PC-9 (cell line): ENCODE measurements at regions of chr22 and their contacts with region 1.

Region 1: GRCh38 chr22:23888615-23889401 is 5.4 kb upstream of the MIF start:
- DNase-seq: no peak
- H3K4me3 ChIP-seq: no peak overlapping the region
- H3K27ac ChIP-seq: peak overlapping the region; percentile 69
- H3K4me1 ChIP-seq: peaks cover 21% of the 10 kb centered on the region
- H3K27me3 ChIP-seq: no peaks in the 10 kb centered on the region
- CTCF ChIP-seq: no peak; the same call in 1 of the 2 replicates

Region 2: GRCh38 chr22:22185844-22186499 is 1702.8 kb before region 1 on chr22:
- CTCF ChIA-PET with region 1: interaction called, 10 read pairs
- POLR2A ChIA-PET with region 1: no interaction called
- intact Hi-C with region 1: no loop called
- DNase-seq: no peak
- H3K4me3 ChIP-seq: no peak overlapping the region
- H3K27ac ChIP-seq: no peak overlapping the region
- H3K4me1 ChIP-seq: no peaks in the 10 kb centered on the region
- H3K27me3 ChIP-seq: peaks cover 52% of the 10 kb centered on the region
- CTCF ChIP-seq: no peak

Region 3: DNA sequence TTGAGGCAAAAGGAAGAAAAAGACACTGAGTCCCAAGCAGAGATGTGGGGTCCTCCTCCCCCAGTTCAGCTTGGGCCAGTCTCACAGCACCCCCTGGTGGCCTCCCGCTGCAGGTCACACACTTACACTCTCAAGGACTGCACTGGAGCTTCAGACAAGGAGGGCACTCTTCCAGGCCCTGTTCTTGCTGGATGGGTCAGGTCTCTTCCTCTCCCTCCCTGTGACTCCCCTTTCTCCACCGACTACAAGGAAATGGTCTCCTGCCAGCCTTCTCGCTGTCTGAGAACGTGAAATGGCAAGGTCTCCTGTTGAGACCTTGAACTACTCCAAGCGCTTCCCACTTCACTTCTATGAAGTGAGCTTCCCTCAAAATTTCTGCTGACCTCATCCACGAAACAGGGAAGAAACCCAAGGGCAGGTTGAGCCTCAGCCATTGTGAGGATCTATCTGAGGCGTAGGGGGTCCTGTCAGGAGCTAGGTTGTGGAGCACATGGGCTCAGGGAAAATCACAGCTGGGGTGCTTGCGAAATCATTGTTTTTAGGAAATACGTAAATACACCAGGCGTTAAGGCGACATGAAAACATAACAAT is 297.5 kb before region 1 on chr22:
- CTCF ChIA-PET with region 1: no interaction called
- POLR2A ChIA-PET with region 1: no interaction called
- intact Hi-C with region 1: no loop called
- DNase-seq: peak in 1 of 2 experiments; percentile 24
- H3K4me3 ChIP-seq: no peak overlapping the region
- H3K27ac ChIP-seq: no peak overlapping the region
- H3K4me1 ChIP-seq: no peaks in the 10 kb centered on the region
- H3K27me3 ChIP-seq: peaks cover 11% of the 10 kb centered on the region; the same call in 1 of the 2 replicates
- CTCF ChIP-seq: peak; percentile 90

Region 4: DNA sequence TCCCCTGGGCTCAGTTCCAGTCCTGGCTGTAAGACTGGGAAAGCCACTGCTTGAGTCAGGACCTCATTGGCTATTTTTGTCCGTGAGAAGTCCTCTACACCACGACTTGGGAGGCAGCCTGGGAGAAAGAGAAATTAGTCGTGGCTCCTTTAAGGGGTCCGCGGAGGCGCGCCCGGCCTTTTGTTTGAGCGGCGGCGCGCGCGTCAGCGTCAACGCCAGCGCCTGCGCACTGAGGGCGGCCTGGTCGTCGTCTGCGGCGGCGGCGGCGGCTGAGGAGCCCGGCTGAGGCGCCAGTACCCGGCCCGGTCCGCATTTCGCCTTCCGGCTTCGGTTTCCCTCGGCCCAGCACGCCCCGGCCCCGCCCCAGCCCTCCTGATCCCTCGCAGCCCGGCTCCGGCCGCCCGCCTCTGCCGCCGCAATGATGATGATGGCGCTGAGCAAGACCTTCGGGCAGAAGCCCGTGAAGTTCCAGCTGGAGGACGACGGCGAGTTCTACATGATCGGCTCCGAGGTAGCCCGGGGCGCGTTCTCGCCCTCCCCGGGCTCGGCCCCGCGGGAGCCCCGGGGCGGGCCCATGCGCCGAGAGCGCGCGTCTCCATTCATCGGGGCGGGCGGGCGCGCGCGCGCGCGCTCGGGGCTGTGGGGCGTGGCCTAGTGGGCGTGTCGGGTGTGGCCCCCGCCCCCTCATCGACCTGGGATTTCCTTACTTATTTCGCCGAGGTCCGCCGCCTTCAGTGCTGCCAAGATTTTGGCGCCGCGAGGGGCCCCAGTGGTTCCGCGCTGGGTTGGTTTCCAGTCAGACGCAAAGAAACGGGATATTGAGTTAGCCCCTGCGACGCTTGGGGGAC is 101.8 kb before region 1 on chr22 and contains the start of gene SMARCB1:
- CTCF ChIA-PET with region 1: no interaction called
- POLR2A ChIA-PET with region 1: no interaction called
- intact Hi-C with region 1: no loop called
- DNase-seq: peak; percentile 63 to 76
- H3K4me3 ChIP-seq: peak within 1 kb of the TSS; percentile 68
- H3K27ac ChIP-seq: peak within 1 kb of the TSS; percentile 88
- H3K4me1 ChIP-seq: peaks cover 26% of the 10 kb centered on the region
- H3K27me3 ChIP-seq: no peaks in the 10 kb centered on the region
- CTCF ChIP-seq: no peak
- total RNA-seq, gene SMARCB1: 61.7 and 80.2 TPM in 2 replicates

Region 5: DNA sequence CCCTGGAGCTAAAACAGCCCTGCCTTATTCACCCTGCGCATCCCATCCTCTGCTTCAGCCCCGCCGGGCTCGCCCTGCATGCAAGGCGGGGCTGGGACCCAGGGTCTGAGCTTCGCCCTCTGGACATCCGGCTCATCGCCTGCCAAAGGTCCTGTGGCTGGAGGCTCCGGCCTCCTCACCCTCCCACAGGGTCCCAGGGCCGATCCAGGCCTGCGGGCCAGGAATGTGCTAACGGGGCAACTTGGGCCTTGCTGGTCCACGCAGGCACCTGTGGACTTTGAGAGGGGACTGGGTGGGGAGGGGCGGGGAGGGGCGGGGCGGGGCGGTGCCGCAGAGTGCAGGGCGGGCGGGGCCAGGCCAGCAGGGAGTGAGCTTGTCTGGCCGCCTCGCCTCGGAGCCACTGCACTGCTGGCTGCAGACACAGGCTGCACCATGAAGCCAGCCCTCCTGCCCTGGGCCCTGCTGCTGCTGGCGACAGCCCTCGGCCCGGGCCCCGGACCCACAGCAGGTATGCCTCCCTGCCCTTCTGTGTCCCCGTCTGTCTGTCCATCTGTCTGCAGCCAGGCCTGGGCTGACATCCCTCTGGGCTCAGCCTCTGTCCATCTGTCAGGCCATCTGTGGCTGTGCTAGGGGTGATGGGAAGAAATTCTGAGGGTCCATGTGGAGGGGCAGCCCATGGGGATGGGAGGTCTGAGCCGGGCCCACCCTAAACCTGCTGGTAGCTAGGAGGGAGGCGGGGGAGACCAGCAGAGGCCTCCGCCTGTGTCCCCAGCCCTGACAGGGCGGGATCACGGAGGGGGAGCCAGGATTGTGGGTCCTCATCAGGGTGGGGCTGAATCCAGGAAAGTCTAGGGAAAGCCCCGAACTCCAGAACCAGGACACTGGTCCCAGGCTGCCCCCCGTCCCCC is 292.5 kb after region 1 on chr22 and contains the start of gene SUSD2:
- CTCF ChIA-PET with region 1: interaction called, 12 read pairs
- POLR2A ChIA-PET with region 1: no interaction called
- intact Hi-C with region 1: no loop called
- DNase-seq: no peak
- H3K4me3 ChIP-seq: no peak within 1 kb of the TSS
- H3K27ac ChIP-seq: 0 out of 2 replicates have a peak within 1 kb of the TSS, but pooled peaks have one; percentile 13
- H3K4me1 ChIP-seq: peaks cover 14% of the 10 kb centered on the region
- H3K27me3 ChIP-seq: no peaks in the 10 kb centered on the region
- CTCF ChIP-seq: no peak
- total RNA-seq, gene SUSD2: 5.5 and 5.7 TPM in 2 replicates

Region 6: DNA sequence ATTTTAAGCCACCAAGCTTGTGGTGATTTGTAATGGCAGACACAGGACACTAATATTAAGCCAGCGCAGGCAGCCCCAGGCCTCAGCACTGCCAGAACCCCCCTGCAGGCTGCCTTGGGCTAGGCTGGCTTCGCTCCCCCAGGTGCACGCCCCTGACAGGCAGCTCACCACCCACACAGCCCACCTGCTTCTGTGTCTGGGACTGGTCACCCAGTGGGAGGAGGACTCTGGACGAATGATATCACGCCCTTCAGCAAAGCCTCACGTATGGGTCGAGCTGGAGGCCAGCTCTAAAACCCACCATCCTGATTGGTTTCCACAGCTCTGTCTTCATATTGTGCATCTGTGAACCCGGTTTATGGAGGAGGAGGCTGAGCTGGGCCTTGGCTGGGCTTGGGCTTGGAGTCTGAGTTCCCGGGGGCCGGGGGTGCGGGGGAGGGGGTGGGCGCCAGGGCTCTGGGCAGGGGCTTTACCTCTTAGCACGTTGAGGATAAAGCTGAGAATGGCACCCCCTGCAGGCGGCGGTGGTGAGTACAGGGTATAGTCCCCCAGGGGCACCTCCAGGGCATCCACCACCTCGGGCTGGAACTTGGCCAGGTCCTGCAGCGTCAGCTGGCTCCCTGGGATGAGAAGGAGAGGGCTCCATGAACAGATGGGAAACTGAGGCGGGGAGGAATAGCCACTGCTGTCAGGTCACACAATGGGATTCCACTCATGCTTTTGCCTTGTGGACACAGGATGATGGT is 342.3 kb after region 1 on chr22:
- CTCF ChIA-PET with region 1: no interaction called
- POLR2A ChIA-PET with region 1: interaction called, 11 read pairs
- intact Hi-C with region 1: no loop called
- DNase-seq: no peak
- H3K4me3 ChIP-seq: no peak overlapping the region
- H3K27ac ChIP-seq: no peak overlapping the region
- H3K4me1 ChIP-seq: no peaks in the 10 kb centered on the region
- H3K27me3 ChIP-seq: no peaks in the 10 kb centered on the region
- CTCF ChIP-seq: peak; percentile 34; the same call in 1 of the 2 replicates